Dendritic cell treated with granulocyte-macrophage colony-stimulating factor and Interleukin-4, amounts not matched to agents 40 ng/mL and 50 ng/mL, for 4 days (primary cell): ENCODE measurements at regions of chr20 and their contacts with region 1.

Region 1: DNA sequence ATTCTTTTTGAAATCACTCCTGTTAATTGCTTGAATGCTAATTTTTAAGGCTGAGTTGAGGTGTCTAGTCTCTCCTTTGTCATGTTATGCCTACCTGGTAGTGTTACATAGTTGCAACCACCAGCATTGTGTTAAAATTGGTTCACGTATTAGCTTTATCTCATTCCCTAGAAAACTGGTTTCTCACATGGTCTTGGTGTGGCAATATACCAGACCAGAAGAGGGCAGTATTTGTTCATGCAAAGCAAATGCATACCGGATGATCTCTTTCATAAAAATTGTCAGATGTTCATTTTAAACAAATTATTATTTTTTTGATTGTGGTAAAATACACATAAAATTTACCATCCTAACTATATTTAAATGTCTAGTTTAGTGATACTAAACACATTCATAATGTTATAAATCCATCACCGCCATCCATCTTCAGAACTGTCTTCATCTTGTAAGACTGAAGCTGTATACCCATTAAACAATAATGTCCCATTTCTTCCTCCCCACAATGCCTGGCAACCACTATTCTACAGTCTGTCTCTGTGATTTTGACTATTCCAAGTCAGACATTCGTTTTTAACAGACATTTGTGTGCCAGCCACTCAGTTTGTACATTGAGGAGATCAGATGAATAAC is 92.8 kb downstream of the ATRN start:
- H3K4me3 Mint-ChIP-seq: no peak overlapping the region
- H3K27ac Mint-ChIP-seq: no peak overlapping the region
- H3K4me1 Mint-ChIP-seq: peaks cover 12% of the 10 kb centered on the region
- H3K27me3 Mint-ChIP-seq: no peaks in the 10 kb centered on the region

Region 2: DNA sequence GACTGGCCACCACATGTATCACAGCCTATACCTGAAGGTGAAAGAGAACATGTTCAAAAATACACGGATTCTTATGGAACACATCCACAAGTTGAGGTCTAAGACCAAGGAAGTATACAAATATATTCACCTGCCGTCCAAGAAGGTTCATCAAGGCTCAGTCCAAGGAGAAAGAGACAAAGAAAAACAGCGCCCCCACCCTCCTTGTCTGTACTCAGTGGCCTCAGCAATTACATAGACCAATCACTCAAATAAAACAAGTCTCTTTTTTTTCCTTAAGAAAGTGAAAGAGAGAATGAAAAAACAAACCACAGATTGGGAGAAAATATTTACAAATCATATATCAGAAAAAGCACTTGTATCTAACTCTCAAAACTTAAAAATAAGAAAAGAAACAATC is 782.7 kb before region 1 on chr20:
- intact Hi-C with region 1: no loop called
- H3K4me3 Mint-ChIP-seq: no peak overlapping the region
- H3K27ac Mint-ChIP-seq: no peak overlapping the region
- H3K4me1 Mint-ChIP-seq: peaks cover 16% of the 10 kb centered on the region
- H3K27me3 Mint-ChIP-seq: peaks cover 19% of the 10 kb centered on the region

Region 3: GRCh38 chr20:3710703-3711483 is 147.2 kb after region 1 on chr20:
- intact Hi-C with region 1: loop called (anchors 5 kb)
- H3K4me3 Mint-ChIP-seq: peak overlapping the region; percentile 92
- H3K27ac Mint-ChIP-seq: peak overlapping the region; percentile 80
- H3K4me1 Mint-ChIP-seq: peaks cover 80% of the 10 kb centered on the region
- H3K27me3 Mint-ChIP-seq: peaks cover under 1% of the 10 kb centered on the region